ENCODE measurements at regions of chr11 and their contacts with region 1.

Region 1: GRCh38 chr11:554824-555472 is 5.6 kb downstream of the LMNTD2 start:
- DNase-seq: peak; percentile 87
- ATAC-seq: peak; percentile 85
- H3K4me3 Mint-ChIP-seq: no peak overlapping the region
- H3K27ac Mint-ChIP-seq: no peak overlapping the region
- H3K4me1 Mint-ChIP-seq: peaks cover 3% of the 10 kb centered on the region
- H3K27me3 Mint-ChIP-seq: peaks cover 2% of the 10 kb centered on the region

Region 2: GRCh38 chr11:629237-629583 is 74.3 kb after region 1 on chr11:
- CTCF ChIA-PET with region 1: interaction called, 4 read pairs
- POLR2A ChIA-PET with region 1: no interaction called
- intact Hi-C with region 1: loop called in 1 of 2 experiments (anchors 5 kb)
- DNase-seq: peak; percentile 51
- ATAC-seq: peak; percentile 66
- H3K4me3 Mint-ChIP-seq: peak overlapping the region; percentile 32
- H3K27ac Mint-ChIP-seq: peak overlapping the region; percentile 53
- H3K4me1 Mint-ChIP-seq: peaks cover 22% of the 10 kb centered on the region
- H3K27me3 Mint-ChIP-seq: peaks cover 25% of the 10 kb centered on the region

Region 3: DNA sequence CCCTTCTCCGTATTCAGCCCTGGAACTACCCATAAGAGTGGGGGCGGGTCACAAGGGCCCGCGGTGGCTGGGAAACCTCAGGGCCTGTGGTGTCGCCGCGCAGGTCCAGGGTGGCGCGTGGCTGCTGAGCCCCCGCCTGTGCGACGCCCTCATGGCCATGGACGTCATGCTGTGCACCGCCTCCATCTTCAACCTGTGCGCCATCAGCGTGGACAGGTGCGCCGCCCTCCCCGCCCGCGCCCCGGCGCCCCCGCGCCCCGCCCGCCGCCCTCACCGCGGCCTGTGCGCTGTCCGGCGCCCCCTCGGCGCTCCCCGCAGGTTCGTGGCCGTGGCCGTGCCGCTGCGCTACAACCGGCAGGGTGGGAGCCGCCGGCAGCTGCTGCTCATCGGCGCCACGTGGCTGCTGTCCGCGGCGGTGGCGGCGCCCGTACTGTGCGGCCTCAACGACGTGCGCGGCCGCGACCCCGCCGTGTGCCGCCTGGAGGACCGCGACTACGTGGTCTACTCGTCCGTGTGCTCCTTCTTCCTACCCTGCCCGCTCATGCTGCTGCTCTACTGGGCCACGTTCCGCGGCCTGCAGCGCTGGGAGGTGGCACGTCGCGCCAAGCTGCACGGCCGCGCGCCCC is 84.5 kb after region 1 on chr11:
- CTCF ChIA-PET with region 1: no interaction called
- POLR2A ChIA-PET with region 1: no interaction called
- intact Hi-C with region 1: loop called in 1 of 2 experiments (anchors 2 kb)
- DNase-seq: no peak
- ATAC-seq: peak; percentile 30
- H3K4me3 Mint-ChIP-seq: no peak overlapping the region
- H3K27ac Mint-ChIP-seq: no peak overlapping the region
- H3K4me1 Mint-ChIP-seq: peaks cover 16% of the 10 kb centered on the region
- H3K27me3 Mint-ChIP-seq: peaks cover 32% of the 10 kb centered on the region

Region 4: GRCh38 chr11:727859-728748 is 173.2 kb after region 1 on chr11:
- CTCF ChIA-PET with region 1: interaction called, 13 read pairs
- POLR2A ChIA-PET with region 1: no interaction called
- intact Hi-C with region 1: loop called (anchors 1 to 2 kb)
- DNase-seq: peak; percentile 92
- ATAC-seq: peak; percentile 80
- H3K4me3 Mint-ChIP-seq: no peak overlapping the region
- H3K27ac Mint-ChIP-seq: no peak overlapping the region
- H3K4me1 Mint-ChIP-seq: peaks cover 5% of the 10 kb centered on the region
- H3K27me3 Mint-ChIP-seq: peaks cover 10% of the 10 kb centered on the region

Measured in activated CD4-positive, alpha-beta T cell treated with anti-CD3 and anti-CD28 coated beads for 36 hours (primary cell).